Mammary epithelial cell (primary cell): ENCODE measurements at regions of chr9 and their contacts with region 1.

Region 1: GRCh38 chr9:112750111-112750767 is at the start of gene SNX30:
- DNase-seq: peak; percentile 88
- H3K4me3 ChIP-seq: peak within 1 kb of the TSS; percentile 83 to 91 (median 86)
- H3K27ac ChIP-seq: peak within 1 kb of the TSS; percentile 30
- H3K4me1 ChIP-seq: peaks cover 45% of the 10 kb centered on the region
- H3K27me3 ChIP-seq: no peaks in the 10 kb centered on the region
- CTCF ChIP-seq: peak in 1 of 2 donors; percentile 7
- total RNA-seq, gene SNX30: 9.8 to 20.8 TPM

Region 2: GRCh38 chr9:112664531-112664930 is 85.7 kb before region 1 on chr9:
- CTCF ChIA-PET with region 1: no interaction called
- dilution Hi-C with region 1: no loop called
- in situ Hi-C with region 1: no loop called
- intact Hi-C with region 1: no loop called
- DNase-seq: no peak
- H3K4me3 ChIP-seq: no peak overlapping the region
- H3K27ac ChIP-seq: no peak overlapping the region
- H3K4me1 ChIP-seq: no peaks in the 10 kb centered on the region
- H3K27me3 ChIP-seq: no peaks in the 10 kb centered on the region
- CTCF ChIP-seq: no peak

Region 3: DNA sequence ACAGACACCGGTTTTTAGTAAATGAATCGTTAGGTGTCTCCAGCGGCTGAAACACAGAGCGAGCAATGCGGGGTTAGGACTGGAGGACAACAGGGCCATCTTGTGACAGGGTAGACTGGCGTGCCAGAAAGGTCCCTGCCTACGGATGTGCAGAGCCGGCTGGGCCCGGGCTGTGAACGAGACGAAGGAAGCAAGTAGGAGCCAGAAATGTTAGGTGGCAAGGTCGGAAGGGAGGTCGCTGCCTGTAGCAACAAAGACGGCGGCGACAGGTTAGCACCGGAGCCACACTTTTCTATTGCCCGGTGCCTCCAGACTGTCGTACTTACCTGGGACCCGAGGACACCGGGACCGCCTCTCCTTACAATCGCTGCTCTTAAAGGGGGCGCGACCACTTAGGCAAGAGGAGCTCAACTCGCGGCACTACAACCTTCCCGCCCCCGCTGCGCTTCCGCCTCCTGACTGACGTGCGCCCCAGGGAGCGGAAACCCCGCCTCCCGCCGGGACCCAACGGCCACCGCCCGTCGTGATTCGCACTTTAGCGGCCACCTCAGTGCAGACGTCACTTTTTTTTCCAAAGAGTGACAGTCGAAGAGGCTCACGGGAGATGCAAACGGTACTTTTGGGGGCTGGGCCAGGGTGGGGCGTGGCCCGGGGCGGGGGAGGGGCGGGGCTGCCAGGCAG is 32.4 kb before region 1 on chr9 and contains the start of gene INIP:
- CTCF ChIA-PET with region 1: interaction called, 4 read pairs
- dilution Hi-C with region 1: no loop called
- in situ Hi-C with region 1: no loop called
- intact Hi-C with region 1: loop called (anchors 2 kb)
- DNase-seq: peak; percentile 97
- H3K4me3 ChIP-seq: peak within 1 kb of the TSS; percentile 63 to 91 (median 80)
- H3K27ac ChIP-seq: peak within 1 kb of the TSS; percentile 70
- H3K4me1 ChIP-seq: peaks cover 8% of the 10 kb centered on the region
- H3K27me3 ChIP-seq: no peaks in the 10 kb centered on the region
- CTCF ChIP-seq: peak in 1 of 2 donors; percentile 29
- total RNA-seq, gene INIP: 23.2 to 24.3 TPM

Region 4: DNA sequence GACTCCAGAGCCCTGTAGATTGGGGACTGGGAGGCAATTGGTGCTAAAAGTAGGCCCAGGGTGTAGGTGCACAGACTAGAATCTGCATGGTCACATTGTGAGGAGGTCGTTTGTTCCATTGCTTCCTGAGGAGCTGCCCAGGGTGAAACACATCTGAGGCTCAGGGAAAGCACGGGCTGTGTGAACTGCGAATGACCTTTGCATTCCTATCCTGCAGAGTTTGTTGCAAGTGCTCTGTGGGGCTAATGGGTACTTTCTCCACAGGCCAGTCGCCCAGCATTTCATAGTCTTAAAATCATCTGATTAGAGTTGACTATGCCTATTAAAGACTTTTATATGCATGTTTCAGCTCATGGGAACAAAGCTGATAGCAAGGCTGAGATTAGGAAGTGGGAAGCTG is 154.8 kb after region 1 on chr9:
- CTCF ChIA-PET with region 1: no interaction called
- dilution Hi-C with region 1: no loop called
- in situ Hi-C with region 1: no loop called
- intact Hi-C with region 1: loop called (anchors 10 kb)
- DNase-seq: no peak
- H3K4me3 ChIP-seq: no peak overlapping the region
- H3K27ac ChIP-seq: no peak overlapping the region
- H3K4me1 ChIP-seq: no peaks in the 10 kb centered on the region
- H3K27me3 ChIP-seq: no peaks in the 10 kb centered on the region
- CTCF ChIP-seq: no peak